ENCODE measurements at regions of chr1 and their contacts with region 1.

Region 1: GRCh38 chr1:171801487-171801891 is 20.0 kb downstream of the METTL13 start:
- DNase-seq: peak; percentile 37
- ATAC-seq: peak; percentile 72
- H3K4me3 ChIP-seq: no peak overlapping the region
- H3K27ac ChIP-seq: no peak overlapping the region
- H3K4me1 ChIP-seq: no peaks in the 10 kb centered on the region
- H3K27me3 ChIP-seq: no peaks in the 10 kb centered on the region
- CTCF ChIP-seq: peak; percentile 71
- EP300 ChIP-seq: no peak
- POLR2A ChIP-seq: no peak
- RAD21 ChIP-seq: peak; percentile 31; the same call in 1 of the 2 replicates

Region 2: DNA sequence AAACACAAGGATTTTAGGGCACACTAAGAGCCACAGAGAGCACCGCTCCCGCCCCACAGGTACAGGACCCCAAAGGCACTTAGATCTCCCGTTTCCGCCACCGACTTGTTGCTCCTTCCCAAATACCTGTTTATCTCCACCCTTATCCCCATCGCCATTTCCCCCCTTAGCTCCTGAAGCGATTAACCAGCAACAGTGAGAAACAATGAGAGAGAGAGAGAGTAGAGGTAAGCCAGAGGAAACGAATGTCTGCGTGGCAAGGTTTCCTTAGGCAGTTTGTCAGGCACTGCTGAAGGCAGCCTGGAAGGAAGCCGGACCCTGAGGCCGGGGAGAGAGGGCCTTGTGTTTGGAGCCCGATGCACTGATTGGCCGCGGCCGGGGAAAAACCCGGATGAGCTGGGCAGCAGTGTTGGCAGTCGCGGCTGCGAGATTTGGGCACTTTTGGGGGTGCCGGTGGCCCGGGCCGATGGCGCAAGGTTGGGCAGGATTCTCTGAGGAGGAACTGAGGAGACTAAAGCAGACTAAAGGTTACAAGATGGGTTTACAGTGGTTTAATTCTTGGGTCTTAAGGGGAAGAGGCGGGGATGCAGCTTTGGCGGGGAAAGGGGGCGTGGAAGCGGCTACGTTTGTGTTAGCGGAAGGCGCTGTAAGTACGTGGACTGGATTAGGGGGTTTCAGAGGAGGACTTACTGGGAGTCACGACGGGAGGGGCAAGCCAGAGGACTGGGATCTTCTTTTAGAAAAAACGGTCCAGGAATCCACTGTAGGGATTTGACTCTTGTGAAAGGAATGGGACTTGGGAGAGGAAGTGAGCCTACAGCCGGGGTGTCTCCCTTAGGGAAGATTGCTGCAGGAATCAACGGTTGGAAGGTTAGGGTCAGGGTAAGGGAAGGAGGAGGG is 1269.5 kb before region 1 on chr1 and contains the start of gene GORAB:
- CTCF ChIA-PET with region 1: no interaction called
- POLR2A ChIA-PET with region 1: no interaction called
- in situ Hi-C with region 1: no loop called
- intact Hi-C with region 1: loop called (anchors 5 kb)
- DNase-seq: peak; percentile 85
- ATAC-seq: peak; percentile 99
- H3K4me3 ChIP-seq: peak within 1 kb of the TSS; percentile 76 to 96 (median 77)
- H3K27ac ChIP-seq: peak within 1 kb of the TSS; percentile 90
- H3K4me1 ChIP-seq: peaks cover 38% of the 10 kb centered on the region
- H3K27me3 ChIP-seq: no peaks in the 10 kb centered on the region; a peak in 1 of 5 replicates
- CTCF ChIP-seq: no peak
- EP300 ChIP-seq: peak in 1 of 2 experiments; percentile 5; a peak in 1 of 4 replicates
- POLR2A ChIP-seq: peak; percentile 89 to 93
- RAD21 ChIP-seq: no peak
- total RNA-seq, gene GORAB: 7.3 and 9.2 TPM in 2 replicates

Region 3: GRCh38 chr1:171984850-171985485 is 183.5 kb after region 1 on chr1:
- CTCF ChIA-PET with region 1: interaction called, 23 read pairs
- POLR2A ChIA-PET with region 1: no interaction called
- in situ Hi-C with region 1: loop called (anchors 5 kb)
- intact Hi-C with region 1: loop called (anchors 1 kb)
- DNase-seq: peak; percentile 40
- ATAC-seq: peak; percentile 75
- H3K4me3 ChIP-seq: no peak overlapping the region
- H3K27ac ChIP-seq: no peak overlapping the region
- H3K4me1 ChIP-seq: no peaks in the 10 kb centered on the region
- H3K27me3 ChIP-seq: no peaks in the 10 kb centered on the region
- CTCF ChIP-seq: peak; percentile 76
- EP300 ChIP-seq: no peak
- POLR2A ChIP-seq: no peak
- RAD21 ChIP-seq: peak; percentile 23; the same call in 1 of the 2 replicates

Measured in HepG2 (cell line).